ENCODE measurements at regions of chr11 and their contacts with region 1.

Region 1: DNA sequence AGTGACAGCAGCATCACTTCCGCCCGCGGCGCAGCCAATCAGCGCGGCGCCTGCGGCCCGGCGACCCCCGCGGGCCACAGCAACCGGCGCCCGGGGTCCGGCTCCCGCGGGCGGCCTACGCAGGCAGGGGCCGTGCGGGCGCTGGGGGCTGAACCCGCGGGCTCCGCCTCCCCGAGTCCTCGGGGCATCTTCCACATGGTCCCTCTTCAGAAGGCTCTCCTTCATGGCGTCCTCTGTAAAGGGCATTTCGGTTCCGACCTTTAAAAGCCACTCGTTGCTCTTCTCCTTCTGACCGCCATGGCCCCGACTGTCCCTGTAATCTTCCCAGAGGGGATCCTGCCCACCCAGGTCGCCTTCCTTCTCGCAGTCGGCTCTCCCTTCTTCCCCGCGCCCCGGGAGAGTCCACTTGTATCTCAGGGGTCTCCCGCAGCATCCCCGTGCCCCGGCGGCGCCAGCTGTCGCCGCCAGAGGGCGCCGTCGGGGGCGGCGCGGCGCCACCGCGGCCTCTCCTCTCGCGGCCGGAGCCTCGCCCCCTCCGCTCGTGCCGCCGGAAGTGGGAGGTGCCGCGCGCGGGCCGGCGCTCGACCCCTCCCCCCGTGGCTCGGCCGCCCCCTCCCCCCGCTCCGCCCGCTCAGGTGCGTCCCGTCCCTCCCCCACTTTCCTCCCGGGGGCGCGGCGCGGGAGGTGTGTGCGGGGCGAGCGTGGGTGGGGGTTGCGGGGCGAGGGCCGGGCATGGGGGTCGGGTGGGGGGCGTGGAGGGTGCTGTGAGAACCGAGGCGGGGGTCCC is at the start of gene RNF214:
- DNase-seq: peak; percentile 74
- H3K4me3 Mint-ChIP-seq: peak within 1 kb of the TSS; percentile 99
- H3K27ac Mint-ChIP-seq: peak within 1 kb of the TSS; percentile 99
- H3K4me1 Mint-ChIP-seq: peaks cover 34% of the 10 kb centered on the region
- H3K27me3 Mint-ChIP-seq: no peaks in the 10 kb centered on the region
- total RNA-seq, gene RNF214: 14.0 to 14.4 TPM

Region 2: DNA sequence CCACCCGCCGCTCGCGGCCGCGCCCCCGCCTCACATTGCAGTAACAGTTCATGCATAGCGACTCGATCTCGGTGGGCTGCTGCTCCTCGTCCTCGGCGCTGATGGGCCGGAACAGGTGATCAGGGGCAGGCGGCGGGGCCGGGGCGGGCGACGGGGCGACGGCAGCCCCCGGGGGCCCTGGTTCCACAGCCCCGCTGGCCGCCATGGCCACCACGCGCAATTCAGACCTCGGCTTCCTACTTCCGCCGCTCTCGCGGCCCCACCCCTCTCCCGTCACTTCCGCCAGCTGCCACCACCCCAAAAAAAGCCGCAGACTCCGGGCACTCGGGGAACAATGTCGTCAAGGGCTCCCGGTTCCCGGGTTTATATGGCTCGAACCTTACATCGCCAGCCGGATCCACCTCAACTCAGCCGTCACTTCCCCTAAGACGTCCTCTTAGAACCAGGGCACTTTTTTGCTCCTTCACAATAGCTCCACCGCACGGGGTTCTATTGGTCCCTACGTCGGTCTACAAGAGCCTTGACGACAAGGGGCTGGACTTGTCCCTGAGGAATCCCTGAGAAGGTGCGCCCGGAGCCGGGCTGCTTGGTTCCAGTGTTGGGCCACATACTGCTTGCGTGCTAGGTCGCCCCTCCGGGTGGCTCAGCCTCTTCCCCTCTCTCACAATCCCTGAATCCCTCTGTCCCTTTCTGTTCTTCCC is 444.3 kb before region 1 on chr11 and contains the start of gene ZPR1:
- CTCF ChIA-PET with region 1: interaction called, 3 read pairs
- intact Hi-C with region 1: loop called (anchors 2 kb)
- DNase-seq: peak; percentile 87
- H3K4me3 Mint-ChIP-seq: peak within 1 kb of the TSS; percentile 92
- H3K27ac Mint-ChIP-seq: peak within 1 kb of the TSS; percentile 87
- H3K4me1 Mint-ChIP-seq: peaks cover 51% of the 10 kb centered on the region
- H3K27me3 Mint-ChIP-seq: no peaks in the 10 kb centered on the region
- total RNA-seq, gene ZPR1: 87.2 to 87.8 TPM

Region 3: DNA sequence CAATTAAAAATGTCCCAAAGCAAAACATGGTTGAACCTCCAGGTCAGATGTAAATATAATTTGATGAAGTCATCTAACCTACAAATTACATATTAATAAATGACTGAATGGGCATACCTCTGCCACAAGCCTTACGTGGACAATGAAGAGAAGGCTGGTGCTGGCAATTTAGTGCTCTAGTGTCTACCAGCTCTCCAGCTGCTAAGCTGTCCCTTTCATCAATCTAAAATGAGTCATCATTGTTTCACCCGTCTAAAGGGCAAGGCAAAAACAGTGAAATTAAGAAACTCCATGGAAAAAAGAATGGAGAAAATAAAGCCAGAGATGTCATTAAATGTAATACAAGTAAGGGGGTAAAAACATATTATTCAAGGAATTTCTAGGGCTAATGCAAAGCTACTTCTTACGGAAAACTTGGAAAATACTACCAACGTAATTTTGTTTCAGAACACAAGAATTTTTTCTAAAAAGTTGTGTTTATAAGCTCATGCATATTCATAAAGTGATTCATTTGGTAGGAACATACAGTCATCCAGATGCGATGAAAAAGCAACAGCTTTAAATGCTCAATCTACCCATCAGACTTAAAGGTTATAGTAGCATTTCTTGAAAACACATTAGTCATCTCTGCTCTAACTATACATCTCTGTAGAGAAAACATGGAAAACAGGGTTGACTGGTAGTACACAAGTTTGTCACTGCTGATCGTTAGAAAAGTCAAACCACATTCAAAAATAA is 205.5 kb before region 1 on chr11:
- CTCF ChIA-PET with region 1: no interaction called
- intact Hi-C with region 1: loop called (anchors 2 kb)
- DNase-seq: peak; percentile 16
- H3K4me3 Mint-ChIP-seq: peak overlapping the region; percentile 14
- H3K27ac Mint-ChIP-seq: peak overlapping the region; percentile 84
- H3K4me1 Mint-ChIP-seq: peaks cover 68% of the 10 kb centered on the region
- H3K27me3 Mint-ChIP-seq: no peaks in the 10 kb centered on the region

Region 4: GRCh38 chr11:117178210-117179034 is 53.9 kb before region 1 on chr11 and contains the start of gene SIDT2:
- CTCF ChIA-PET with region 1: interaction called, 72 read pairs
- intact Hi-C with region 1: loop called (anchors 1 kb)
- DNase-seq: peak; percentile 92
- H3K4me3 Mint-ChIP-seq: peak within 1 kb of the TSS; percentile 93
- H3K27ac Mint-ChIP-seq: peak within 1 kb of the TSS; percentile 79
- H3K4me1 Mint-ChIP-seq: peaks cover 28% of the 10 kb centered on the region
- H3K27me3 Mint-ChIP-seq: no peaks in the 10 kb centered on the region
- total RNA-seq, gene SIDT2: 23.9 to 25.6 TPM

Region 5: GRCh38 chr11:117817368-117818040 is 585.2 kb after region 1 on chr11:
- CTCF ChIA-PET with region 1: no interaction called
- intact Hi-C with region 1: loop called (anchors 1 kb)
- DNase-seq: peak; percentile 98
- H3K4me3 Mint-ChIP-seq: peak overlapping the region; percentile 56
- H3K27ac Mint-ChIP-seq: peak overlapping the region; percentile 95
- H3K4me1 Mint-ChIP-seq: peaks cover 65% of the 10 kb centered on the region
- H3K27me3 Mint-ChIP-seq: no peaks in the 10 kb centered on the region

Region 6: DNA sequence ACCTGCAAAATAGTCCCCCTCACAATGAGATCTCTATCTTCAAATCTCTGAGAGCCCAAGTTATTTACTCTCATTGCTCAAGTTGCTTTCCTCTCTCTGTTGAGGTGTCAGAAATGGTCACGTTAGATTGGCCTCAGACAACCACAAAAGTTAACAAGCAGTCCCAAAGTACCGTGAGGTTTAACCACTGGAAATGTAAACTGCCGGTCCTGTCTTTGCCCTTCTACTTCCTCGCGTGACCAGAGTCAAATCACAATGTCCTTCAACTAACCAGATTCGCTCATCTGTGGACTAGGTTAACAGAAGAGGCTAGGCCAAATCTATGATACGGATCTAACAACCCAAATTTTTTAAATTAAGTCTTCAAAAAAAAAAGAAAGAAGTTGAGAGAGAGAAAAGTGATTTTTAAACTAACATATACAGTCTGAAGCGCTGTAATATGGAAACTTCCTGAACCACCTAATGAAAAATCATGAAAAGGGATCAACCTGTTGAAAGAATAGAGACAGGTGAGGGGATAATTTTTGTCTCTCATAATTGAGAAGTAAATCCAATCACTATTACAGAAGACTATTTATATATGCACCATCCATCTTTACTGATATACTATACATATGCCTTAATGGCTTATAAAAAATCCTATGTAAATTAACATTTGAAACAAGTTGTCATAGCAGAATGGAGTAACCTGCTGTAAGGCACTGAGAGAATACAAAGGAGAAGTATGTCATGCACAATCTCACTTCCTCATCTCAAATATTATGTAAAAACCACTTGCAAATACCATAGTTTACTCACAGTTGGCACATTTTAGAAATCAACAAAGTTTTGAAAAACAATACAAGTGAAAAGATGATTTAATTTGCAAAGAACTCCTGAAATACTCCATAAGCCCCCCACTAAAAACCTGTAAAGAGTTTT is 995.8 kb after region 1 on chr11:
- CTCF ChIA-PET with region 1: no interaction called
- intact Hi-C with region 1: loop called (anchors 5 kb)
- DNase-seq: peak; percentile 30
- H3K4me3 Mint-ChIP-seq: peak overlapping the region; percentile 3
- H3K27ac Mint-ChIP-seq: peak overlapping the region; percentile 89
- H3K4me1 Mint-ChIP-seq: peaks cover 20% of the 10 kb centered on the region
- H3K27me3 Mint-ChIP-seq: no peaks in the 10 kb centered on the region